ENCODE measurements at regions of chr9 and their contacts with region 1.

Region 1: GRCh38 chr9:119556129-119556875 is 187.1 kb upstream of the BRINP1 start:
- DNase-seq: peak; percentile 6 to 37
- ATAC-seq: peak; percentile 58 to 86
- H3K4me3 ChIP-seq: peak overlapping the region; percentile 7 to 48 (median 31)
- H3K27ac ChIP-seq: no peak overlapping the region
- H3K4me1 ChIP-seq: no peaks in the 10 kb centered on the region
- H3K27me3 ChIP-seq: no peaks in the 10 kb centered on the region
- CTCF ChIP-seq: peak; percentile 71 to 85 (median 79)
- POLR2A ChIP-seq: no peak

Region 2: DNA sequence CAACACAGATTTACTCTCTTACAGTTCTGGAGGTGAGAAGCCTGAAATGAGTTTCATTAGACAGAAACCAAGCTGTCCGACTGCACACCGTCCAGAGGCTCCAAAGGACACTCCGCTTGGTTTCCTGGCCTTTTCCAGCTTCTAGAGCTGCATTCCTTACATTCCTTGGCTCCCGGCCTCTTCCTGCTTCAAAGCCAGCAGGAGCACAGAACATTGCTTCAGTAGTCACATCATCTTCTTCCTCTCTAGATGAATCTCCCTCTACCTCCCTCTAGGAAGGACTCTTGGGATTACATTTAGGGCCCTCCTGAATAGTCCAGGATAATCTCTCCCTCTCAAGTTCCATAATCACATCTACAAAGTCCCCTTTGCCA is 810.3 kb after region 1 on chr9:
- in situ Hi-C with region 1: loop called in 2 of 4 experiments (anchors 25 kb)
- intact Hi-C with region 1: no loop called
- DNase-seq: no peak
- ATAC-seq: no peak
- H3K4me3 ChIP-seq: no peak overlapping the region
- H3K27ac ChIP-seq: no peak overlapping the region
- H3K4me1 ChIP-seq: no peaks in the 10 kb centered on the region
- H3K27me3 ChIP-seq: no peaks in the 10 kb centered on the region
- CTCF ChIP-seq: no peak
- POLR2A ChIP-seq: no peak

Measured in gastrocnemius medialis (tissue), 4 donors.